ENCODE measurements at regions of chr1 and their contacts with region 1.

Region 1: GRCh38 chr1:35882945-35883634 is at the start of gene AGO1:
- DNase-seq: peak; percentile 98
- total RNA-seq, gene AGO1: 21.1 TPM

Region 2: DNA sequence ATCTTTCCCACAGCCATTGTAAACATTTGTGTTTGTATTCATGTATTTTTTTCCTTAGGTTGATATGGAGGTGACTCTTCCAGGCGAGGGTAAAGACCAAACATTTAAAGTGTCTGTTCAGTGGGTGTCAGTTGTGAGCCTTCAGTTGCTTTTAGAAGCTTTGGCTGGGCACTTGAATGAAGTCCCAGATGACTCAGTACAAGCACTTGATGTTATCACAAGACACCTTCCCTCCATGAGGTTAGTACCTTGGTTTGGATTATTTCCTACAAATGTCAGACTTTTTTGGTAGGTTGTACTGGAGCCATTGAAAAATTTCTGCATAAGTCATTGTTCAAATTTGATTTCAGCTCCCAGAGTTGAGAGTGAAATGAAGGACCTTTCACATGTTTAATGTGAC is 57.8 kb before region 1 on chr1:
- intact Hi-C with region 1: no loop called
- DNase-seq: no peak

Region 3: GRCh38 chr1:35930593-35931445 is 47.7 kb after region 1 on chr1 and contains the start of gene AGO3:
- intact Hi-C with region 1: loop called (anchors 5 kb)
- DNase-seq: peak; percentile 94
- total RNA-seq, gene AGO3: 17.5 TPM

Region 4: DNA sequence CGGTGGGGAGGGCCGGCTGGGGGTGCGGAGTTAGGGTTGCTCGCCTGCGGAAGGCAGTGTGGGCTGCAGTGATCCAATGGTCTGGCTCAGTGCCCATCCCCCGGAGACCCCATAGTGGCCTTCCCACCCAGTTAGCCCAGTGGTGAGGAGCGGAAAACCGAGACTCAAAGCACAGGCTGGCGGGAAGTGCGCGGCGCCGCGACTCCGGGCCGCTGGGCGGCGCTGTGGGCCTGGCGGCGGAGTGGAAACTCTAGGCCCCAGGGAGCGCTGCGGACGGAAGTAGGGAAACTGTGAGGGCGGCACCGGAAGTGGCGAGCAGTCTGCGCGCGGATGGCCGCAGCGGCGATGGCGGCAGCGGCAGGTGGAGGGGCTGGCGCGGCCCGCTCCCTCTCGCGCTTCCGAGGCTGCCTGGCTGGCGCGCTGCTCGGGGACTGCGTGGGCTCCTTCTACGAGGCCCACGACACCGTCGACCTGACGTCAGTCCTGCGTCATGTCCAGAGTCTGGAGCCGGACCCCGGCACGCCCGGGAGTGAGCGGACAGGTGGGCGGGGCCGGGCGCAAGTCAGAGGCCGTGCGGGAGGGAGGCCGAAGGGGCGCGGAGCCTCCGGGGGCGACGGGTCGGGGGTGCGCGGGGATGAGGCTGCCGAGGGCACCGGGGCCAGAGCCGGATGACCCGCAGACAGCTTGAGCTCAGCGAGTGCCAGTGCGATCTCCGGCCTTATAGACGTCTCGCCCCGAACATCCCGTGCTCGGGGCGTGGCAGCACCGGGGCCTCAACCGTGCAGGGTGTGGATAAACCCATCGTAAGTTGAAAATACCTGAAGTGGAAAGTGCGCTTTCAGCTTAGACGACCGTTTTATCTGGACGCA is 205.7 kb after region 1 on chr1 and contains the start of gene ADPRS:
- intact Hi-C with region 1: loop called (anchors 2 kb)
- DNase-seq: peak; percentile 96
- total RNA-seq, gene ADPRS: 17.6 TPM

Region 5: GRCh38 chr1:36134505-36135329 is 251.6 kb after region 1 on chr1:
- intact Hi-C with region 1: no loop called
- DNase-seq: no peak